Tibial artery (tissue), 4 donors: ENCODE measurements at regions of chr14 and their contacts with region 1.

Region 1: GRCh38 chr14:73949744-73950734 is at the starts of genes COQ6 and FAM161B:
- DNase-seq: peak; percentile 96 to 97
- H3K4me3 ChIP-seq: peak within 1 kb of the TSS; percentile 81 to 85
- H3K27ac ChIP-seq: peak within 1 kb of the TSS; percentile 90 to 93
- H3K4me1 ChIP-seq: peaks cover 0 to 27% (median 15%) of the 10 kb centered on the region in 4 donors
- H3K27me3 ChIP-seq: no peaks in the 10 kb centered on the region
- CTCF ChIP-seq: no peak

Region 2: GRCh38 chr14:74018586-74019407 is 68.8 kb after region 1 on chr14 and contains the starts of genes BBOF1 and ENTPD5:
- intact Hi-C with region 1: loop called (anchors 1 kb)
- DNase-seq: peak; percentile 83 to 93
- H3K4me3 ChIP-seq: peak within 1 kb of the TSS; percentile 83 to 84
- H3K27ac ChIP-seq: peak within 1 kb of the TSS; percentile 96 to 97
- H3K4me1 ChIP-seq: peaks cover 0 to 13% (median 6%) of the 10 kb centered on the region in 4 donors
- H3K27me3 ChIP-seq: no peaks in the 10 kb centered on the region
- CTCF ChIP-seq: peak in 1 of 2 experiments; percentile 29